ENCODE measurements at regions of chr11 and their contacts with region 1.

Region 1: GRCh38 chr11:78277314-78277994 is 88.7 kb downstream of the USP35 start:
- DNase-seq: no peak
- H3K4me3 ChIP-seq: no peak overlapping the region
- H3K27ac ChIP-seq: no peak overlapping the region
- H3K4me1 ChIP-seq: peaks cover 0 to 8% (median 0%) of the 10 kb centered on the region in 4 donors
- H3K27me3 ChIP-seq: no peaks in the 10 kb centered on the region
- CTCF ChIP-seq: no peak

Region 2: DNA sequence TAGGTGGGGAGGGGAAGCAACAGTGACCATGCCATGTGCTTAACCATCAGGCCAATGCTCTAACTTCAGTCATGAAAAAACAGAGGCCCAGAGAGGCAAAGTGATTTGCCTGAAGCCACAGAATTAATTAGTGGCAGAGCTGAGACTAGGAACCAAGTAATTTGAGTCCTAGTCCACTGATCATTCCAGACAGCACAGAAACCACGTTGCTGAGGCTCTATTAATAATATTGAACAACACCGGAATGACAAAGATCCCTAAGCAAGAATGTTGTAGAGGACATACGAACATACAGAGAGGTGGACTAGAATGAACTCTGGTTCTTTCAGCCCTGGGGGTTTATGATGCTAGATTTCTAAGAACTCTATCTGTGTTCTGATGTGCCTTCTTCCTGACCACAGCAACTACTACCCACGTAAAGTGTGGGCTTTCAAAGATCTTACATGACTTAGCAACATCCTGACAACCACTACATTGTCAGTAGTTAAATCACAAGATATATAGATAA is 47.9 kb after region 1 on chr11:
- intact Hi-C with region 1: loop called (anchors 10 kb)
- DNase-seq: no peak
- H3K4me3 ChIP-seq: no peak overlapping the region
- H3K27ac ChIP-seq: no peak overlapping the region
- H3K4me1 ChIP-seq: peaks cover 0 to 2% (median 0%) of the 10 kb centered on the region in 4 donors
- H3K27me3 ChIP-seq: no peaks in the 10 kb centered on the region
- CTCF ChIP-seq: no peak

Measured in tibial artery (tissue), 4 donors.